Ovary (tissue), 10 donors: ENCODE measurements at regions of chr7 and their contacts with region 1.

Region 1: GRCh38 chr7:139075031-139075652 is 34.4 kb downstream of the ZC3HAV1 start:
- DNase-seq: peak; percentile 47 to 80 (median 55)
- H3K4me3 ChIP-seq: no peak overlapping the region
- H3K27ac ChIP-seq: no peak overlapping the region
- H3K4me1 ChIP-seq: no peaks in the 10 kb centered on the region
- H3K27me3 ChIP-seq: no peaks in the 10 kb centered on the region
- CTCF ChIP-seq: peak; percentile 72 to 84 (median 76)
- EP300 ChIP-seq: no peak
- POLR2A ChIP-seq: no peak

Region 2: GRCh38 chr7:138865843-138866242 is 209.3 kb before region 1 on chr7:
- intact Hi-C with region 1: no loop called
- DNase-seq: no peak
- H3K4me3 ChIP-seq: no peak overlapping the region
- H3K27ac ChIP-seq: no peak overlapping the region
- H3K4me1 ChIP-seq: no peaks in the 10 kb centered on the region
- H3K27me3 ChIP-seq: no peaks in the 10 kb centered on the region
- CTCF ChIP-seq: no peak
- EP300 ChIP-seq: no peak
- POLR2A ChIP-seq: no peak

Region 3: DNA sequence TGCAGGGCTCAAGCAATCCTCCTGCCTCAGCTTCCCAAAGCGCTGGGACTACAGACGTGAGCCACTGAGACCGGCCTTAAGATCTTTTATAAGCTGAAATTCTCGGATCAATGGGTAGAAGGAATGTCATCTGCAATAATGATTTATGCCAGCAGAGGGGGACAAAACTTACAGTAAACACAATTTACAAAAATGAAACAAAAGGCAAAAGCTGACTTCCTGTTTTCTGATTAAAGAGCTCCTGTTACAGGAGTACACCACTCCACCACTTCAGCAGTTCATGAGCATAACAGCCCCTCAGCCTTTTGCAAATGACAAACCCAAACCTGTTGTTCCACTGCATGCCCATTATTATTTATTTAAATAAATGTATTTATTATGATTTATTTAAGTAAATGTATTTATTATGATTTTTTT is 188.6 kb before region 1 on chr7:
- intact Hi-C with region 1: loop called in 1 of 4 experiments (anchors 10 kb)
- DNase-seq: no peak
- H3K4me3 ChIP-seq: no peak overlapping the region
- H3K27ac ChIP-seq: no peak overlapping the region
- H3K4me1 ChIP-seq: peaks cover 2% of the 10 kb centered on the region
- H3K27me3 ChIP-seq: no peaks in the 10 kb centered on the region
- CTCF ChIP-seq: peak in 2 of 3 donors; percentile 30 to 34
- EP300 ChIP-seq: no peak
- POLR2A ChIP-seq: no peak

Region 4: GRCh38 chr7:139016931-139017511 is 58.1 kb before region 1 on chr7:
- intact Hi-C with region 1: loop called in 1 of 4 experiments (anchors 5 kb)
- DNase-seq: peak; percentile 45 to 71 (median 65)
- H3K4me3 ChIP-seq: no peak overlapping the region
- H3K27ac ChIP-seq: no peak overlapping the region
- H3K4me1 ChIP-seq: peaks cover 1% of the 10 kb centered on the region
- H3K27me3 ChIP-seq: no peaks in the 10 kb centered on the region
- CTCF ChIP-seq: peak; percentile 40 to 45 (median 43)
- EP300 ChIP-seq: no peak
- POLR2A ChIP-seq: no peak